ENCODE measurements at regions of chr6 and their contacts with region 1.

Region 1: GRCh38 chr6:139375232-139376016 is 976 bp upstream of the CITED2 start:
- H3K4me3 Mint-ChIP-seq: peak overlapping the region; percentile 99
- H3K27ac Mint-ChIP-seq: peak overlapping the region; percentile 100
- H3K4me1 Mint-ChIP-seq: peaks cover 40% of the 10 kb centered on the region
- H3K27me3 Mint-ChIP-seq: no peaks in the 10 kb centered on the region

Region 2: GRCh38 chr6:139323511-139324300 is 51.7 kb before region 1 on chr6:
- intact Hi-C with region 1: no loop called
- H3K4me3 Mint-ChIP-seq: peak overlapping the region; percentile 37
- H3K27ac Mint-ChIP-seq: peak overlapping the region; percentile 80
- H3K4me1 Mint-ChIP-seq: peaks cover 54% of the 10 kb centered on the region
- H3K27me3 Mint-ChIP-seq: no peaks in the 10 kb centered on the region

Region 3: GRCh38 chr6:139448051-139448649 is 72.7 kb after region 1 on chr6:
- intact Hi-C with region 1: loop called (anchors 2 kb)
- H3K4me3 Mint-ChIP-seq: no peak overlapping the region
- H3K27ac Mint-ChIP-seq: peak overlapping the region; percentile 78
- H3K4me1 Mint-ChIP-seq: peaks cover 57% of the 10 kb centered on the region
- H3K27me3 Mint-ChIP-seq: no peaks in the 10 kb centered on the region

Region 4: DNA sequence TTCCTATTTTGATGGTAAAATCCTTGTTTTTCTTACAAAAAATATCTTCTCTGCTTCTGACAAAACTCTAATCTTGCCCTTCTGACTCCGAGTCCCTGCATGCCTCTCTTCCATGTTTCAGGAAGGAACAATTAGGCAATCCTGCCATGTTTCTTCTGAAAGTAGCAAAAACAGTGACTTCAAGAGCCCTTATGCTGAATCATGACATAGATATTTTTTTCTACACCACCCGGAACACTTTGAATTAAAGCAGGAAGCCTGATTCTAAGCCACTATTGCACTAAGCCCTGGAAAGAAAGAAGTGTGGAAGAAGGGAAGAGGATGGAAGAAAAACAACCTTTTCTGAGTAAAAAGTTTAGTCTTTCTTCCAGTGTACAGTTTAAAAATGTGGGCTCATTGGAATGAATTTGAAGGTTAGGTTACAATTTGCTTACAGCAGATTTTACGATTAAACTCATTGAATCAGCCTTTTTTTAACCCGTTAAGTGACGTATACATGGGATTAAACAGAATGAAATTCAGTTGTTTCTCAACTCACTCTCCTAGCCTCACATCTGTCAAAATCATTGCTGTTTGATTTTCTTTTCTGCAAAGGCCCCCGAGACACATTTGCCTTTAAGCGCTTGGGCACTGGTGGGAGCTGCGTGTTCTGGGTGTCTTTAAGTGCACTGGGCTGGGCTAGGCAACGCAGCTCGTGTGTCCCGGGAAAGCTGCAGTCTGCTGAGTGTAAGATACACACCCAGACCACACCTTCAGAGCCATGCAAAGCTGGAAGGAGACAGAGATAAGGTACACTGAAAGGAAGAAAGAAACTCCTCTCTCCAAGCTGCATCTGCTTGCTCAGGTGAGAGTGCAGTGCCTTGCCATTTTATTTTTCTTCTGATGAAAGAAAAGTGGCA is 158.4 kb after region 1 on chr6:
- intact Hi-C with region 1: loop called (anchors 2 kb)
- H3K4me3 Mint-ChIP-seq: peak overlapping the region; percentile 52
- H3K27ac Mint-ChIP-seq: peak overlapping the region; percentile 78
- H3K4me1 Mint-ChIP-seq: peaks cover 33% of the 10 kb centered on the region
- H3K27me3 Mint-ChIP-seq: no peaks in the 10 kb centered on the region

Region 5: GRCh38 chr6:139686309-139686708 is 310.9 kb after region 1 on chr6:
- intact Hi-C with region 1: no loop called
- H3K4me3 Mint-ChIP-seq: no peak overlapping the region
- H3K27ac Mint-ChIP-seq: no peak overlapping the region
- H3K4me1 Mint-ChIP-seq: peaks cover 21% of the 10 kb centered on the region
- H3K27me3 Mint-ChIP-seq: peaks cover 2% of the 10 kb centered on the region

Region 6: DNA sequence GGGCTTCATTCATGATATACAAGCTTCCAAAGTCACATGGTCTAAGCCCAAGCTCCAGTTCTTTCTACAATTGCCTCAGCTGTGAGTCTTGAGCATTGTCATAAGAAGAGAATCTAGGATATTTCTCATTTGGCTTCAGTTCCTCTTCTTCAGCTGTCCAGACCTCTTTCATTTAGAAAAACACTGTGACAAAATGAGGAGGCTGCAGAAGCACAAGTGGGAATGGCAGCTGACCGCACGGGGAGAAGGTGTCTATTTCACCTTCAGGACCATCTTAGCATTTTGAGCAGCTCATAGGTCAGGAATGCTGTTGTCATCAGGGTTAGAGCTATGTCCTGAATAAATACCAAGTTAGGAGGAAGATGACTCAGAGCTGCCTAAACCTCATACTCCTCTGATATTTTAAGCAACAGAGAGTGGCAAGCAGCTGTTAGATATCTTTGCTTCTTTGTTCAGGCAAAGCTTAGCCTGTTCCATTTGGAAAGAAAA is 389.1 kb after region 1 on chr6:
- intact Hi-C with region 1: loop called (anchors 1 kb)
- H3K4me3 Mint-ChIP-seq: peak overlapping the region; percentile 58
- H3K27ac Mint-ChIP-seq: peak overlapping the region; percentile 94
- H3K4me1 Mint-ChIP-seq: peaks cover 30% of the 10 kb centered on the region
- H3K27me3 Mint-ChIP-seq: no peaks in the 10 kb centered on the region

Region 7: GRCh38 chr6:139881728-139882211 is 506.3 kb after region 1 on chr6:
- intact Hi-C with region 1: loop called (anchors 2 kb)
- H3K4me3 Mint-ChIP-seq: peak overlapping the region; percentile 18
- H3K27ac Mint-ChIP-seq: peak overlapping the region; percentile 88
- H3K4me1 Mint-ChIP-seq: peaks cover 53% of the 10 kb centered on the region
- H3K27me3 Mint-ChIP-seq: no peaks in the 10 kb centered on the region

Region 8: GRCh38 chr6:139927742-139928305 is 552.4 kb after region 1 on chr6:
- intact Hi-C with region 1: loop called (anchors 2 kb)
- H3K4me3 Mint-ChIP-seq: no peak overlapping the region
- H3K27ac Mint-ChIP-seq: peak overlapping the region; percentile 39
- H3K4me1 Mint-ChIP-seq: peaks cover 36% of the 10 kb centered on the region
- H3K27me3 Mint-ChIP-seq: no peaks in the 10 kb centered on the region

Region 9: GRCh38 chr6:140441256-140441655 is 1065.8 kb after region 1 on chr6:
- intact Hi-C with region 1: loop called (anchors 2 kb)
- H3K4me3 Mint-ChIP-seq: no peak overlapping the region
- H3K27ac Mint-ChIP-seq: peak overlapping the region; percentile 8
- H3K4me1 Mint-ChIP-seq: peaks cover 25% of the 10 kb centered on the region
- H3K27me3 Mint-ChIP-seq: no peaks in the 10 kb centered on the region